ENCODE measurements at regions of chr6 and their contacts with region 1.

Region 1: GRCh38 chr6:166770216-166771116 is 143.4 kb upstream of the RPS6KA2 start:
- DNase-seq: peak; percentile 21
- ATAC-seq: no peak
- H3K4me3 ChIP-seq: no peak overlapping the region
- H3K27ac ChIP-seq: no peak overlapping the region
- H3K4me1 ChIP-seq: no peaks in the 10 kb centered on the region
- H3K27me3 ChIP-seq: no peaks in the 10 kb centered on the region
- CTCF ChIP-seq: peak; percentile 47; the same call in 1 of the 2 replicates

Region 2: DNA sequence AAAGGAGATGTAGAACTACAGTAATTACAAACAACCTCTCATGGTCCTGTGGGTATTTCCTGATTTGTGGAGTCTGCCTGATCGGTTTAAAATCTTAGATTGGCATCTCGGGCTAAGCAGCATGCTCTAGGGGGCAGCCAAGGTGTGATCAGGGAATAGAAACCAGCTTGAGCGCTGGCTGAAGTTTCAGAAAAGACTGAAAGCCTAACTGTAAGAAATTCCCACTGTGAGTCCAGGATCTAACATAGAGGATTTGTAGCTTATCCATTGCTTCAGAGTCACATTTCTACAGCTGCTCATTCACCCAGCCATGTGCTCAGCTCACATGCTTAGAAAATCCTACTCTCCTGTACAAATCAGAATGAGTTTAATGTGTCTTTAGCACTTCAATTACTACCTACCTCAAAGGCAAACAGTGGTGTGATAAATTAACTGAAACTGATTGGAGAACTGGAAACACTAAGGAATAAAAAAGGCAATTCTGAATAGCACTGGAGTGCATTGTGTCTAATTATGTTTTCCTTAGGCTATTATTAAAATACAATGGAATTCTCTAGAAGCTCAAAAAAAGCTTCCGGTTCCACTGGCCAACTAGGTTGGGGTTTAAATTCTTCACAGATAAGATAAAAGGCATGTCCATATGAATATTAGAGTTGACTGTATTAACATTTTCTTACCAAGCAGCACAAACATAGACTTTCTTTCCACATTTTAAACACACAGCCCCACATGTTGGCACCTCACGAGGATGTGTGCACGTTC is 313.9 kb before region 1 on chr6:
- CTCF ChIA-PET with region 1: no interaction called
- POLR2A ChIA-PET with region 1: no interaction called
- intact Hi-C with region 1: loop called (anchors 5 kb)
- DNase-seq: peak; percentile 33
- ATAC-seq: peak; percentile 63
- H3K4me3 ChIP-seq: no peak overlapping the region
- H3K27ac ChIP-seq: no peak overlapping the region
- H3K4me1 ChIP-seq: no peaks in the 10 kb centered on the region
- H3K27me3 ChIP-seq: no peaks in the 10 kb centered on the region
- CTCF ChIP-seq: peak; percentile 53

Region 3: GRCh38 chr6:166515072-166515810 is 255.2 kb before region 1 on chr6:
- CTCF ChIA-PET with region 1: no interaction called
- POLR2A ChIA-PET with region 1: no interaction called
- intact Hi-C with region 1: loop called (anchors 5 kb)
- DNase-seq: peak; percentile 88
- ATAC-seq: peak; percentile 96
- H3K4me3 ChIP-seq: no peak overlapping the region
- H3K27ac ChIP-seq: no peak overlapping the region
- H3K4me1 ChIP-seq: peaks cover 8% of the 10 kb centered on the region
- H3K27me3 ChIP-seq: no peaks in the 10 kb centered on the region
- CTCF ChIP-seq: peak; percentile 66

Region 4: DNA sequence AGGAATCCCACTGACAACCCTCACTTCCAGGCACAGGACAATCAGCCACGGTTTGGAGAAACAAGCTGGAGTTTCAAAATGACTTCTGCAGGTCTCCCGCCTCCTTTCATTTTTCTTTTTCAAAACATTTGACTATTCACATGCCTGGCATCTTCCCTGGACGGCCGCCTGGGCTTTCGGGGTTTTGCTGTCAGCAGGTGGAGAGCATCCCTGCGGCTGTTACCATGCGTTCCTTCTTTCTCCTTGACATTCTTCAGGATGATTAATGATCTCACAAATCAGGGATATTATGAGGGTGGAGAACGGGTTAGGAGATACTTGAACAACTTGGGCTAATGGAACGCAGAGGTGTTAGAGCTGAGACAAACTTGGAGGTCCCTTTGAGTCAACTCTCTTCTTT is 244.9 kb before region 1 on chr6:
- CTCF ChIA-PET with region 1: no interaction called
- POLR2A ChIA-PET with region 1: no interaction called
- intact Hi-C with region 1: no loop called
- DNase-seq: no peak
- ATAC-seq: no peak
- H3K4me3 ChIP-seq: no peak overlapping the region
- H3K27ac ChIP-seq: no peak overlapping the region
- H3K4me1 ChIP-seq: peaks cover 14% of the 10 kb centered on the region
- H3K27me3 ChIP-seq: no peaks in the 10 kb centered on the region
- CTCF ChIP-seq: no peak

Region 5: DNA sequence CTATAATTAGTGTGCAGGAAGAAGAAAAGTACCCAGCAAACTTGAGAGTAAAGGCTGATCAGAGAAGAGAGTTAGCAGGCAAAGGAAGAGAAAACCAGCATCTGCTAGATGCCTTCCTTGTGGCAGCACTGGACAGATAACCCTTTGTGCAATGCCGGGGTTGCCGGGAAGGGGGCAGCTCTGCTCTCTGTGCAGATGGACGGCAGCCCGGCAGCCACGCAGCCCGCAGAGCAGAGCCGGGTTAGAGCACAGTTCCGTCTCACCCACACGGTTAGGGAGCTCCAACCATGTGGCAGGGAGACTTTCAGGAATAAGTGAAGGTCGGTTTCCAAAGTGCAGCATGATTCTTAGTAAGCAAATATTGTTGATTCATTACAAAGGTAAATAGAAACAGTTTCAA is 63.4 kb before region 1 on chr6:
- CTCF ChIA-PET with region 1: interaction called, 4 read pairs
- POLR2A ChIA-PET with region 1: no interaction called
- intact Hi-C with region 1: loop called (anchors 2 kb)
- DNase-seq: peak; percentile 65
- ATAC-seq: peak; percentile 96
- H3K4me3 ChIP-seq: no peak overlapping the region
- H3K27ac ChIP-seq: peak overlapping the region; percentile 2
- H3K4me1 ChIP-seq: 0 out of 2 replicates have a peak, but pooled peaks cover 9% of the 10 kb centered on the region
- H3K27me3 ChIP-seq: no peaks in the 10 kb centered on the region
- CTCF ChIP-seq: peak; percentile 71

Region 6: DNA sequence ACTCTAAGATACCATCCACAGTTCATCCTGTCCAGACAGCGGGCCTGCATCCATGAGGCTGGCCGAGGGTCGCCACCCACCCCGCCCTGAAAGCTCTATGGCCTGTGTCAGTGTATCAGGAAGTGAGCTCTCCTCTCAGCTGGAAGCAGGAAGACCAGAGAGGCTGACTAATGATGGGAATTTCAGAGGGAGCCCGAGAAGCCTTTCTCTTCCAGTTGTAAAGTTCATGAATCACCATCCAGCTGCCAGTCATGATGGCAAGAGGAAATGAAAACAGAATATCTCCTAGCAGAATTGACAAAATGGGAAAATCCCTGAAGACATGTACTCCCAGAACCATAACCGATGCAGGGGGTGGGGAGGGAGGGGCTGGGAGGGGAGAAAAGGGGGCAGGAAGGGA is 33.8 kb before region 1 on chr6:
- CTCF ChIA-PET with region 1: no interaction called
- POLR2A ChIA-PET with region 1: no interaction called
- intact Hi-C with region 1: no loop called
- DNase-seq: peak; percentile 80
- ATAC-seq: peak; percentile 92
- H3K4me3 ChIP-seq: no peak overlapping the region
- H3K27ac ChIP-seq: peak overlapping the region; percentile 82
- H3K4me1 ChIP-seq: peaks cover 27% of the 10 kb centered on the region
- H3K27me3 ChIP-seq: no peaks in the 10 kb centered on the region
- CTCF ChIP-seq: no peak

Region 7: DNA sequence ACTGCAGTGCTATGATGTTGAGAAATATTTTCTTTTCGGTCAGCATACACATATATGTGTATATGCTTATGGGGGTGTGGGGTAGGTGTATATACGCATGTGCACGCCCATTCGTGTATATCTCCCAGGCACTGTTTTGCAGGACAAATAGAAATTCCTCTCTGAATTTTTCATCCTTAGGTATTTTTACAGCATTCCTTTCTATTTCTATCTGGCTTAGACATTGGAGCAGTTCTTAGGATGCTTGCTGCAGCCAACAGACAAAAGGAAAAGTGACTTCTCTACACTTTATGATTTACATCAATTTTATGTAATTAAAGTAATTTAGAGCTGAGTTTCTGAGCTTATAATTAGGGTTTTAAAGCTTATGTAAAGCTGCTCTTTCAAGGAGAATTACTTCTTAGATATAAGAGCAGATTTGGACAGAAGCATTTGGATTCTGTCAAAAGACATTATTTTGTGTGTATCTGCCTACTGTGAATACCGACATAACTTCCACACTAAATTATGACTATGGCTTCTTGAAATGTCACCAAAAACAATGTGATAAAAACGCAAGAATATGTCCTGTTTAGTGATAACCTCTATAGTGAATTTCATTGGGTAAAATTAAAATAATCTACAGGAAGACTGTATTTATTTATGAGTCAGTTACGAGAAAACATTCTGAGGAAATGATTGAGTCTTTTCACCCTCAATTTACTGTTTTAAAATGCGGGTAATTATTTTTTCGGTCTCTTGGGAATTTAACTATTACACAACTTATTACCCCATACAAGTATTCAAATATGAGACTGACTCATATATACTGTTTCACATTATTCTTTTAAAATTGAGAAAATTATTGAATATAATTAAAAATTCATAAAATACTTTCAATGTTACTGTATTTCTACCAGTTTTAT is 207.4 kb after region 1 on chr6:
- CTCF ChIA-PET with region 1: no interaction called
- POLR2A ChIA-PET with region 1: no interaction called
- intact Hi-C with region 1: no loop called
- DNase-seq: no peak
- ATAC-seq: no peak
- H3K4me3 ChIP-seq: no peak overlapping the region
- H3K27ac ChIP-seq: no peak overlapping the region
- H3K4me1 ChIP-seq: no peaks in the 10 kb centered on the region
- H3K27me3 ChIP-seq: no peaks in the 10 kb centered on the region
- CTCF ChIP-seq: no peak

Measured in PC-3 (cell line).